Activated CD4-positive, alpha-beta memory T cell treated with anti-CD3 and anti-CD28 coated beads for 36 hours (primary cell): ENCODE measurements at regions of chr12 and their contacts with region 1.

Region 1: GRCh38 chr12:13255792-13256691 is 59.5 kb downstream of the EMP1 start:
- DNase-seq: peak; percentile 91
- H3K4me3 Mint-ChIP-seq: no peak overlapping the region
- H3K27ac Mint-ChIP-seq: no peak overlapping the region
- H3K4me1 Mint-ChIP-seq: no peaks in the 10 kb centered on the region
- H3K27me3 Mint-ChIP-seq: peaks cover 6% of the 10 kb centered on the region

Region 2: GRCh38 chr12:13044002-13044905 is 211.8 kb before region 1 on chr12 and contains the start of gene FAM234B:
- CTCF ChIA-PET with region 1: interaction called, 11 read pairs
- POLR2A ChIA-PET with region 1: no interaction called
- intact Hi-C with region 1: no loop called
- DNase-seq: peak; percentile 78
- H3K4me3 Mint-ChIP-seq: peak within 1 kb of the TSS; percentile 80
- H3K27ac Mint-ChIP-seq: no peak within 1 kb of the TSS
- H3K4me1 Mint-ChIP-seq: peaks cover 25% of the 10 kb centered on the region
- H3K27me3 Mint-ChIP-seq: peaks cover 3% of the 10 kb centered on the region
- total RNA-seq, gene FAM234B: 6.8 TPM

Region 3: GRCh38 chr12:13270817-13271216 is 14.8 kb after region 1 on chr12:
- CTCF ChIA-PET with region 1: interaction called, 49 read pairs
- POLR2A ChIA-PET with region 1: no interaction called
- intact Hi-C with region 1: no loop called
- DNase-seq: no peak
- H3K4me3 Mint-ChIP-seq: no peak overlapping the region
- H3K27ac Mint-ChIP-seq: no peak overlapping the region
- H3K4me1 Mint-ChIP-seq: no peaks in the 10 kb centered on the region
- H3K27me3 Mint-ChIP-seq: peaks cover 23% of the 10 kb centered on the region

Region 4: DNA sequence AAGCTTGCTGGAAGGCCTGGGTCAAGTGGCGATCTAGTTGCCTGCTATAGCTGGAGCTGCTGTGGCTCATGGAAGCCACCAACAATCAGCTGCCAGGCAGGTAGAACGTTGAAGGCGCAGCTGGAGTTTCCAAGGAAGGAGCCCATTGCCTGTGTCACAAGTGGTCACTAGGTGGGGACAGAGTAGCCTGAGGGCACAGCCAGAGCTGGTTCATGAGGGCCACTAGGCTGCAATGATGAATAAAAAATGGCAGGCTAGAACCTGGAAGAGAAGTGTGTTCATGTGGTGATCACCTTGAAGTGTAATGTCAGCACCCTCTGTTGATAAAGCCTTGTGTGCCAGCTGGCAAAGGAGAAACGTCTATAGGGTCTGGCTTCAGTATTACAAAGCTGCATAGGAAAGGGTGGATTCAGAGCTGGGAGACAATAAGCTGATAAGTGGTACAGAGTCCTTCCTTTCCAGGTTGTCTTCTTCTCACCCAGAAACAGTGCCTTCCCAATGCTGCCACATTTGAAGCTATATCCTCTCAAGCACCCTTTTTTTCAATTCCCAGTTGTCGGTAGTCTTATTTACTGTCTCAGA is 106.3 kb after region 1 on chr12:
- CTCF ChIA-PET with region 1: interaction called, 10 read pairs
- POLR2A ChIA-PET with region 1: no interaction called
- intact Hi-C with region 1: no loop called
- DNase-seq: peak; percentile 69
- H3K4me3 Mint-ChIP-seq: no peak overlapping the region
- H3K27ac Mint-ChIP-seq: no peak overlapping the region
- H3K4me1 Mint-ChIP-seq: no peaks in the 10 kb centered on the region
- H3K27me3 Mint-ChIP-seq: peaks cover 20% of the 10 kb centered on the region

Region 5: GRCh38 chr12:14167005-14167628 is 911.1 kb after region 1 on chr12:
- CTCF ChIA-PET with region 1: interaction called, 16 read pairs
- POLR2A ChIA-PET with region 1: no interaction called
- intact Hi-C with region 1: no loop called
- DNase-seq: peak; percentile 53
- H3K4me3 Mint-ChIP-seq: no peak overlapping the region
- H3K27ac Mint-ChIP-seq: no peak overlapping the region
- H3K4me1 Mint-ChIP-seq: no peaks in the 10 kb centered on the region
- H3K27me3 Mint-ChIP-seq: peaks cover 4% of the 10 kb centered on the region